Right ventricle myocardium inferior (tissue), 1 donor: ENCODE measurements at regions of chr3 and their contacts with region 1.

Region 1: GRCh38 chr3:47282424-47283192 is at the starts of genes KIF9 and KLHL18:
- DNase-seq: peak; percentile 98
- ATAC-seq: peak; percentile 98
- total RNA-seq, gene KIF9: 7.6 TPM
- total RNA-seq, gene KLHL18: 49.8 TPM

Region 2: GRCh38 chr3:47164007-47164881 is 118.4 kb before region 1 on chr3 and contains the start of gene SETD2:
- intact Hi-C with region 1: loop called (anchors 10 kb)
- DNase-seq: peak; percentile 97
- ATAC-seq: peak; percentile 98
- total RNA-seq, gene SETD2: 26.7 TPM

Region 3: DNA sequence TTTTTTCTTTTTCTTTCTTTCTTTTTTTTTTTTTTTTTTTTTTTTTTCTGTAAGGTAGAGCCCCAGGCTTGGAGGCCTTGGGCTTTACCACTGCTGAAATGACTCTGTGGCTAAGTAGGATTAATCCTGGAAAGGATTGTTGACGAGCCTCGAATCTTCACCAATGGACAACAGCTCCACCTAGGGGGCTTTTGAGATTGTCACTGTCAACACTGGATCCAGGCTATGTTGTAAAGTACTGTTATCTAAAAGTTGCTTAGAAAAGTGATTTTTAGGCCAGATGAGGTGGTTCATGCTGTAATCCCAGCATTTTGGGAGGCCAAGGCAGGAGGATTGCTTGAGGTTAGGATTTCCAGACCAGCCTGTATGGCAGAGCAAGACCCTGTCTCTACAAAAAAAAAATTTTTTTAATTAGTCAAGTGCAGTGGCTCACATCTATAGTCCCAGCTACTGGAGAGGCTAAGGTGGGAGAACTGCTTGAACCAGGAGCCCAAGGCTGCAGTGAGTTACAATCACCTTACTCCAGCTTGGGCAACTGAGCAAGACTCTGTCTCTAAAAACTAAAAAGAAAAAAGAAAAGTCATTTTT is 41.8 kb after region 1 on chr3:
- intact Hi-C with region 1: loop called (anchors 5 kb)
- DNase-seq: no peak
- ATAC-seq: peak; percentile 85

Region 4: GRCh38 chr3:47370887-47371697 is 88.5 kb after region 1 on chr3:
- intact Hi-C with region 1: loop called (anchors 10 kb)
- DNase-seq: no peak
- ATAC-seq: no peak